CD8-positive, alpha-beta memory T cell (primary cell): ENCODE measurements at regions of chr11 and their contacts with region 1.

Region 1: DNA sequence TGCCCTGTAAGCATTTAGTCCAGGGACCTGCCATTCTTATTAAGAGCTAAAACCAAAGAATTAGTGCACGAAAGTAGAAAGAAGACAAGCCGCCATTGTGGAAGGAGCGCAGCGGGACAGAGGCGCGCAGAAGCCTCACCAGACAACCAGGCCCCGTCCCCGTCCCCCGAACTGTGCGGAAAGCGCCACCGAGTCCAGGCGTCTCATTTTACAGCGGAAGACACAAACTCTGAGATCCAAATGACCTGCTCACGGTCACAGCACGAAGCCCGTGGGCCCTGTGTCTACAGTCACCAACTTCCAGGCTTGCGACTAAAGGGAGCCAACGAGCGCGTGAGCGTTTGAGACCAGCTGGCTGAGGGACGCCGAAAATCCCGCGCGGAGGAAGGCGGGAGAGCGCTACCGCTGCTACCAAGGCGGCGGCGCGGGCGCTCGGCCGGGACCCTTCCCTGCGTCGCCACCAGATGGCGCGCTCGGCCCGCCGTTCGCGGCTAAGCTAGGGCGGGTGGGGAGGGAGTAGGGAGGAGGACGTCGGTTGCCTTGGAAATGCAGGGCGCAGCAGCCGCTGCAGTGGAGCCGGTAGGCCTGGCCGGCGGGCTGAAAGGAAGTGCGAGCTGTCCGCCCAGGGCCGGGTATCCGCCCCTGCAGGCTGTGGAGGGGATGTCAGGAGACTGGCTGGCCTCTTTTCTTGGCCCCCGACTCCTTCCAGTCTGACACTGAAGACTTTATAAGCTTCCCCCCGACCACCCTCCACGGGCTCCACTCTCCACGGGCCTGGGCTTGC is 434 bp upstream of the CCDC83 start:
- DNase-seq: peak; percentile 82 to 91 (median 87)
- H3K4me3 ChIP-seq: peak overlapping the region; percentile 83
- H3K4me3 Mint-ChIP-seq: peak overlapping the region; percentile 82 to 94 (median 90)
- H3K27ac ChIP-seq: peak overlapping the region; percentile 78
- H3K27ac Mint-ChIP-seq: peak overlapping the region; percentile 85 to 95 (median 94)
- H3K4me1 ChIP-seq: peaks cover 9% of the 10 kb centered on the region
- H3K4me1 Mint-ChIP-seq: peaks cover 9 to 15% (median 11%) of the 10 kb centered on the region in 3 donors
- H3K27me3 ChIP-seq: no peaks in the 10 kb centered on the region
- H3K27me3 Mint-ChIP-seq: no peaks in the 10 kb centered on the region

Region 2: GRCh38 chr11:85540635-85541205 is 314.0 kb before region 1 on chr11:
- CTCF ChIA-PET with region 1: no interaction called
- POLR2A ChIA-PET with region 1: no interaction called
- DNase-seq: no peak
- H3K4me3 ChIP-seq: no peak overlapping the region
- H3K4me3 Mint-ChIP-seq: no peak overlapping the region
- H3K27ac ChIP-seq: no peak overlapping the region
- H3K27ac Mint-ChIP-seq: no peak overlapping the region
- H3K4me1 ChIP-seq: no peaks in the 10 kb centered on the region
- H3K4me1 Mint-ChIP-seq: no peaks in the 10 kb centered on the region
- H3K27me3 ChIP-seq: no peaks in the 10 kb centered on the region
- H3K27me3 Mint-ChIP-seq: peaks cover 0 to 4% of the 10 kb centered on the region in 2 donors

Region 3: GRCh38 chr11:85664615-85665481 is 189.9 kb before region 1 on chr11 and contains the start of gene CREBZF:
- CTCF ChIA-PET with region 1: interaction called, 7 read pairs
- POLR2A ChIA-PET with region 1: interaction called, 12 read pairs
- DNase-seq: peak; percentile 86 to 95 (median 90)
- H3K4me3 ChIP-seq: peak within 1 kb of the TSS; percentile 92
- H3K4me3 Mint-ChIP-seq: peak within 1 kb of the TSS; percentile 97 to 100 (median 99)
- H3K27ac ChIP-seq: peak within 1 kb of the TSS; percentile 98
- H3K27ac Mint-ChIP-seq: peak within 1 kb of the TSS; percentile 97 to 100 (median 100)
- H3K4me1 ChIP-seq: peaks cover 37% of the 10 kb centered on the region
- H3K4me1 Mint-ChIP-seq: peaks cover 40 to 50% (median 49%) of the 10 kb centered on the region in 3 donors
- H3K27me3 ChIP-seq: no peaks in the 10 kb centered on the region
- H3K27me3 Mint-ChIP-seq: peaks cover 2 to 3% of the 10 kb centered on the region in 2 donors
- total RNA-seq, gene CREBZF: 45.0 to 45.1 TPM

Region 4: DNA sequence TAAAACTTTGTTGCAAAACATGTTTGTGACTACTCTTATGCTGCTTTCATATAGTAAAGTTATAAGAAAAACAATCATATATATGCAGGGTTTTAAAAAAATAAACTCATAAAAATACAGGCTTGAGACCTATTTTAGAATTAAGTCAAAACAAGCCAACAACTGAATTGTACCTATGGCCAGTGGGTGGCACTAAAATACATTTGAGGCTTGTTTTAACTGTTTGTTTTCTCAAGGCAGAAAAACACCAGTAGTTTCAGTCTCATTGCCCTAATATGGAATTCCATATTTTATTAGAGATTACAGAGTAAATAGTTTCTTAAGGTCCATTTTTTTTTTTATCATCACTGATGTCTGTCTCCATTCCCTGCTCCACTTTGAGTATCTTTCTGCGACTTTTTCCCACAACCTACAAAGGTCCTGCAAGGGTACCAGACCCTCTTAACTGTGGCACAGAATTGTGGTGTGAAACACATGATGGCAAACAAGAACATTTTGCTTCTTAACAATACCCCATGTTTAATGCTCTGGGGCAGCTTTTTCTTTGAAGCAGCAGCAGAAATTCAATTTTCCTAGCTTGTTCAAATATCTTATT is 160.3 kb before region 1 on chr11:
- CTCF ChIA-PET with region 1: interaction called, 12 read pairs
- POLR2A ChIA-PET with region 1: no interaction called
- DNase-seq: peak in 2 of 5 donors; percentile 28 to 44
- H3K4me3 ChIP-seq: no peak overlapping the region
- H3K4me3 Mint-ChIP-seq: no peak overlapping the region
- H3K27ac ChIP-seq: no peak overlapping the region
- H3K27ac Mint-ChIP-seq: peak overlapping the region in 1 of 8 donors; percentile 54
- H3K4me1 ChIP-seq: peaks cover 7% of the 10 kb centered on the region
- H3K4me1 Mint-ChIP-seq: peaks cover 7 to 35% (median 23%) of the 10 kb centered on the region in 3 donors
- H3K27me3 ChIP-seq: no peaks in the 10 kb centered on the region
- H3K27me3 Mint-ChIP-seq: no peaks in the 10 kb centered on the region

Region 5: GRCh38 chr11:85699957-85700741 is 154.6 kb before region 1 on chr11:
- CTCF ChIA-PET with region 1: interaction called, 12 read pairs
- POLR2A ChIA-PET with region 1: no interaction called
- DNase-seq: peak in 1 of 5 donors; percentile 40
- H3K4me3 ChIP-seq: peak overlapping the region; percentile 14
- H3K4me3 Mint-ChIP-seq: peak overlapping the region; percentile 1 to 63 (median 50)
- H3K27ac ChIP-seq: no peak overlapping the region
- H3K27ac Mint-ChIP-seq: peak overlapping the region; percentile 36 to 94 (median 80)
- H3K4me1 ChIP-seq: peaks cover 19% of the 10 kb centered on the region
- H3K4me1 Mint-ChIP-seq: peaks cover 25 to 45% (median 33%) of the 10 kb centered on the region in 3 donors
- H3K27me3 ChIP-seq: no peaks in the 10 kb centered on the region
- H3K27me3 Mint-ChIP-seq: no peaks in the 10 kb centered on the region

Region 6: GRCh38 chr11:85826116-85826855 is 28.5 kb before region 1 on chr11:
- CTCF ChIA-PET with region 1: interaction called, 28 read pairs
- POLR2A ChIA-PET with region 1: interaction called, 4 read pairs
- DNase-seq: peak in 1 of 5 donors; percentile 30
- H3K4me3 ChIP-seq: no peak overlapping the region
- H3K4me3 Mint-ChIP-seq: peak overlapping the region in 6 of 7 donors; percentile 29 to 80 (median 39)
- H3K27ac ChIP-seq: no peak overlapping the region
- H3K27ac Mint-ChIP-seq: peak overlapping the region; percentile 89 to 98 (median 96)
- H3K4me1 ChIP-seq: peaks cover 62% of the 10 kb centered on the region
- H3K4me1 Mint-ChIP-seq: peaks cover 60 to 74% (median 74%) of the 10 kb centered on the region in 3 donors
- H3K27me3 ChIP-seq: no peaks in the 10 kb centered on the region
- H3K27me3 Mint-ChIP-seq: no peaks in the 10 kb centered on the region

Region 7: DNA sequence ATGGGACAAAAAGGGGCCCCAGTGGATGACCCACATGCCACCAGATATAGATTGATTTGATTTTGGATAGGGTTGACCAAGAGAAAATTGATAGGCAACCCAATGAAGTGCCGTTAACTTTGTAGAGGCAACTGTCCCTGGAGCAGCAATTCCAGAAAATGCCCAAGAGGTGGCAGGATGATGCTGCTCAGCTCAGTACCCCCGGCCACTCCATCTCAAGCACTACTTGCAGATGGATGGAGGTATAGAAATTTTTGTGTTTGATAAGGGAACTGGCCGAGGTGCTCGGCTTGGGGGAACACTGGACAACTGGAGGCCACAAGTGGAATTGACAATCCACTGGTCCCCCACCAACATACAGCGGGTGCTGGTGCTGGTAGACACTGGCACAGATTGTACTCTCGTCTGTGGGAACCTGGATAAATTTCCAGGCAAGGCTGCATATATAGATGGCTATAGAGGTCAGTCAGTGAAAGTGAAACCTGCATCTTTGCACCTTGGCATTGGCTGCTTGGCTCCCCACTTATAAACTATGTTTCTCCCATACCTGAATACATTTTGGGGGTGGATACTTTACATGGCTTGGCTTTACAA is 86.7 kb after region 1 on chr11:
- CTCF ChIA-PET with region 1: no interaction called
- POLR2A ChIA-PET with region 1: no interaction called
- DNase-seq: no peak
- H3K4me3 ChIP-seq: no peak overlapping the region
- H3K4me3 Mint-ChIP-seq: no peak overlapping the region
- H3K27ac ChIP-seq: no peak overlapping the region
- H3K27ac Mint-ChIP-seq: no peak overlapping the region
- H3K4me1 ChIP-seq: no peaks in the 10 kb centered on the region
- H3K4me1 Mint-ChIP-seq: peaks cover 8 to 12% (median 11%) of the 10 kb centered on the region in 3 donors
- H3K27me3 ChIP-seq: no peaks in the 10 kb centered on the region
- H3K27me3 Mint-ChIP-seq: no peaks in the 10 kb centered on the region

Region 8: DNA sequence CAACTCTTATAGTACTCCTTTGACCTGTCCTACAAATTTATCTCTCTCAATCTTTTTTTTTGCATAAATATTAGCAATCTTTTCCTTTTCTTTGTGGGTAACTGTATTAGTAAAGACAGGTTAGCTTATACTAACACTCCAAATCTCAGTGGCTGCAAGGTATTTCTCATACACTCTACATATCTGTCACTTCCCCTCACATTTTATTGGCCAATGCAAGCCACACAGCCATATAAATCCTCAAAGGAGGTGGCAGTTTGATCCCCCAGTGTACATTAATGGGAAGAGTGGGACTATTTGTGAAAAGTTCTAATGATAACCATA is 347.2 kb after region 1 on chr11:
- CTCF ChIA-PET with region 1: interaction called, 10 read pairs
- POLR2A ChIA-PET with region 1: no interaction called
- DNase-seq: no peak
- H3K4me3 ChIP-seq: peak overlapping the region; percentile 79
- H3K4me3 Mint-ChIP-seq: no peak overlapping the region
- H3K27ac ChIP-seq: peak overlapping the region; percentile 64
- H3K27ac Mint-ChIP-seq: no peak overlapping the region
- H3K4me1 ChIP-seq: peaks cover 16% of the 10 kb centered on the region
- H3K4me1 Mint-ChIP-seq: no peaks in the 10 kb centered on the region
- H3K27me3 ChIP-seq: no peaks in the 10 kb centered on the region
- H3K27me3 Mint-ChIP-seq: no peaks in the 10 kb centered on the region

Region 9: GRCh38 chr11:86218125-86219084 is 363.7 kb after region 1 on chr11:
- CTCF ChIA-PET with region 1: interaction called, 13 read pairs
- POLR2A ChIA-PET with region 1: no interaction called
- DNase-seq: peak; percentile 39 to 68 (median 46)
- H3K4me3 ChIP-seq: peak overlapping the region; percentile 43
- H3K4me3 Mint-ChIP-seq: peak overlapping the region; percentile 10 to 80 (median 76)
- H3K27ac ChIP-seq: no peak overlapping the region
- H3K27ac Mint-ChIP-seq: peak overlapping the region in 4 of 8 donors; percentile 1 to 38 (median 14)
- H3K4me1 ChIP-seq: peaks cover 9% of the 10 kb centered on the region
- H3K4me1 Mint-ChIP-seq: peaks cover 9 to 20% (median 11%) of the 10 kb centered on the region in 3 donors
- H3K27me3 ChIP-seq: no peaks in the 10 kb centered on the region
- H3K27me3 Mint-ChIP-seq: peaks cover 5 to 32% of the 10 kb centered on the region in 2 donors